Activated CD8-positive, alpha-beta T cell treated with anti-CD3 and anti-CD28 coated beads, Interleukin-2, amount 10 ng/mL, durations not matched to agents 7 days and 5 days (primary cell): ENCODE measurements at regions of chr14 and their contacts with region 1.

Region 1: DNA sequence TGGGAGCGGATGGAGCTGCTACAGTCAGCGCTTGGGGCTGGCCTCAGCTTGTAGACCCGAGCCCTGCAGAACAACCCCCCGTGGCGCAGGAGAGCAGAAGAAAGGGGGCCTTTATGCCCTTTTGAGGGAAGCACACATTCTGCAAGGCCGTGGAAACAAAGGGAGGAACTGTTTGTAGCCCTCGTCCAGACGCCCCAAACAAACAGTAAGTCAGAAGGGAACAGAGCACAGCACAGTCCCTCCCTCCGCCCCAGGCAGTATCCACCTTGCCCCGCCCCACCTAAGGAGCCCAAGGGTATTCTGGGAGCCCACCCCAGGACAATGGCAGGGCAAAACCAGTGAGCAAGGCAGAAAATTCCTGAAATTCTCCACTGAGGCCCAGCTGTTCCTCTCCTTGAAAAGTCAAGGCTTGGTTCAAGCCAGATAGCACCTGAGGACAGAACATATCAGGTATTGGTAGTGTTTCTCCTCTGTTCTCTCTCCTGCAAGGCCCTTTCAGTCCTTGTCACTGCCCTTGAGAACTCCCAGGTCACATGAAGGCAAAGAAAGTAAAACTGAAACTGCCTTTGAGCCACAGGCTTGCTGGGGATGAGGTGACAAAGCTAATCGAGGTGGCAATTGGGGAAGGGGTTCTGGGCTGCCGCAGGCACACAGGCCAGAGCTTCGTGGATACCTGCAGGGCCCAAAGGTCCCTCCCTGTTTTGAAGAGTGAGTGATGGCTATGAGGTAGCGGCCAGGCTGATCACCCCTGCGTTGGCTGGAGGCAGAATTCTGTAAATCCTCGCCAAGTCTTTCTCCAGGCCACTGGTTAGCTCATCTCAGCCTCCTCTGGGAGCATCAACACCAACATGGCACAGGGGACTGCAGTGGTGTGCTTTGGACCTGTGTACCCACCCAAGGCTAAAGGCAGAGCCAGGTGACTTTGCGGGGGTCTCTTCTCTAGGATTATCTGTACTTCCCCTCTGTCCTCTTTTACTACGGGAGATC is 499 bp downstream of the DGLUCY start:
- DNase-seq: peak; percentile 86
- ATAC-seq: peak; percentile 81
- H3K4me3 Mint-ChIP-seq: peak overlapping the region; percentile 93
- H3K27ac Mint-ChIP-seq: peak overlapping the region; percentile 91
- H3K4me1 Mint-ChIP-seq: peaks cover 68% of the 10 kb centered on the region
- H3K27me3 Mint-ChIP-seq: no peaks in the 10 kb centered on the region

Region 2: DNA sequence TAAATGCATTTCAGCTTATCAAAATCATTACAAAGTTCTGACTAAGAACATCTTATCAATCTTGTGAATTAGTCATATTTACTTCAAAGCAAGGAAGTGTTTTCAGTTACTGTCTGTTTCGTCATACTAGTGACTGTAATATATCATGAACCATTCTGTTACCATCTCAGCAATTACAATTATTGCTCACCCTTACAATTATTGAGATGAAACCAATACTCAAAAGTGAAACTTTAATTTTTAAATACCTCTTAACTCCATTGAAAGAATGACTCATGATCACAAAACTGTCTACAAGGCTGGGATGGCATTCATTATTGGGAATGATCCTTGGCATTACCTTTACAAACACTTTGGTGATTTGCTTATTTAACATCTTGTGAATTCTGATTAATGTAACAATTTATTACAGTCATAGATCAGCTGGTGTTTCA is 144.2 kb before region 1 on chr14:
- CTCF ChIA-PET with region 1: interaction called, 6 read pairs
- POLR2A ChIA-PET with region 1: interaction called, 10 read pairs
- DNase-seq: no peak
- ATAC-seq: peak; percentile 66
- H3K4me3 Mint-ChIP-seq: peak overlapping the region; percentile 29
- H3K27ac Mint-ChIP-seq: peak overlapping the region; percentile 78
- H3K4me1 Mint-ChIP-seq: peaks cover 41% of the 10 kb centered on the region
- H3K27me3 Mint-ChIP-seq: no peaks in the 10 kb centered on the region

Region 3: GRCh38 chr14:91060351-91061055 is 53.9 kb before region 1 on chr14 and contains the start of gene RPS6KA5:
- CTCF ChIA-PET with region 1: interaction called, 108 read pairs
- POLR2A ChIA-PET with region 1: interaction called, 203 read pairs
- DNase-seq: peak; percentile 100
- ATAC-seq: peak; percentile 85
- H3K4me3 Mint-ChIP-seq: peak within 1 kb of the TSS; percentile 90
- H3K27ac Mint-ChIP-seq: peak within 1 kb of the TSS; percentile 65
- H3K4me1 Mint-ChIP-seq: peaks cover 62% of the 10 kb centered on the region
- H3K27me3 Mint-ChIP-seq: no peaks in the 10 kb centered on the region
- total RNA-seq, gene RPS6KA5: 50.8 to 53.1 TPM

Region 4: GRCh38 chr14:91078095-91078737 is 36.2 kb before region 1 on chr14:
- CTCF ChIA-PET with region 1: interaction called, 17 read pairs
- POLR2A ChIA-PET with region 1: interaction called, 28 read pairs
- DNase-seq: peak; percentile 81
- ATAC-seq: peak; percentile 93
- H3K4me3 Mint-ChIP-seq: peak overlapping the region; percentile 40
- H3K27ac Mint-ChIP-seq: peak overlapping the region; percentile 91
- H3K4me1 Mint-ChIP-seq: peaks cover 73% of the 10 kb centered on the region
- H3K27me3 Mint-ChIP-seq: no peaks in the 10 kb centered on the region

Region 5: GRCh38 chr14:91149479-91149921 is 35.1 kb after region 1 on chr14:
- CTCF ChIA-PET with region 1: no interaction called
- POLR2A ChIA-PET with region 1: no interaction called
- DNase-seq: no peak
- ATAC-seq: no peak
- H3K4me3 Mint-ChIP-seq: no peak overlapping the region
- H3K27ac Mint-ChIP-seq: no peak overlapping the region
- H3K4me1 Mint-ChIP-seq: peaks cover 44% of the 10 kb centered on the region
- H3K27me3 Mint-ChIP-seq: no peaks in the 10 kb centered on the region

Region 6: DNA sequence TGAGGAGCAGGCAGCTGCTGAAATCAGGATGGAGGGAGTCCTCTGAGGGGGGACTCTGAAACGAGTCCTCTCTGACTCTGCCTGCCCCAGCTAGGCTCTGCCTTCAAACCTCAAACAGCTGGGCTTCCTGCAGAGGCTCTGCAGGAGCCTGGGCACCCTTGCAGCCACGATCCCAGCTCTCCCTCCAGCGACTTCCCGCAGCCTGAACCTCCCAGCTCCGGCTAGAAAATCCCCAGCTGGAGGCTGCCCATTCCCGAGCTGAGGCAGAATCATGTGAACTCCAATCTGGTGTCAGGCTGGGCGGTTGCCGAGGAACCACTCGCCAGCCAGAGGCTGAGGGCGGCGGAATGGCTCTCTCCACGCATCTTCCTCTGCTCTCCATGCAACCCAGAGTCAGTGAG is 130.1 kb after region 1 on chr14 and contains the start of gene GPR68:
- CTCF ChIA-PET with region 1: interaction called, 3 read pairs
- POLR2A ChIA-PET with region 1: interaction called, 37 read pairs
- DNase-seq: peak; percentile 61
- ATAC-seq: peak; percentile 12
- H3K4me3 Mint-ChIP-seq: peak within 1 kb of the TSS; percentile 87
- H3K27ac Mint-ChIP-seq: peak within 1 kb of the TSS; percentile 93
- H3K4me1 Mint-ChIP-seq: peaks cover 74% of the 10 kb centered on the region
- H3K27me3 Mint-ChIP-seq: no peaks in the 10 kb centered on the region
- total RNA-seq, gene GPR68: 44.6 to 45.3 TPM